MCF 10A (cell line): ENCODE measurements at regions of chr4 and their contacts with region 1.

Region 1: GRCh38 chr4:105471566-105472176 is 2.2 kb downstream of the PPA2 start:
- DNase-seq: peak; percentile 87
- H3K4me3 Mint-ChIP-seq: peak overlapping the region; percentile 98
- H3K27ac Mint-ChIP-seq: peak overlapping the region; percentile 99
- H3K4me1 Mint-ChIP-seq: peaks cover 18% of the 10 kb centered on the region
- H3K27me3 Mint-ChIP-seq: no peaks in the 10 kb centered on the region
- CTCF ChIP-seq: peak; percentile 56

Region 2: GRCh38 chr4:104064646-104065577 is 1406.8 kb before region 1 on chr4:
- CTCF ChIA-PET with region 1: no interaction called
- POLR2A ChIA-PET with region 1: interaction called, 3 read pairs
- intact Hi-C with region 1: loop called (anchors 5 kb)
- DNase-seq: peak; percentile 72
- H3K4me3 Mint-ChIP-seq: no peak overlapping the region
- H3K27ac Mint-ChIP-seq: peak overlapping the region; percentile 2
- H3K4me1 Mint-ChIP-seq: no peaks in the 10 kb centered on the region
- H3K27me3 Mint-ChIP-seq: no peaks in the 10 kb centered on the region
- CTCF ChIP-seq: peak; percentile 63

Region 3: DNA sequence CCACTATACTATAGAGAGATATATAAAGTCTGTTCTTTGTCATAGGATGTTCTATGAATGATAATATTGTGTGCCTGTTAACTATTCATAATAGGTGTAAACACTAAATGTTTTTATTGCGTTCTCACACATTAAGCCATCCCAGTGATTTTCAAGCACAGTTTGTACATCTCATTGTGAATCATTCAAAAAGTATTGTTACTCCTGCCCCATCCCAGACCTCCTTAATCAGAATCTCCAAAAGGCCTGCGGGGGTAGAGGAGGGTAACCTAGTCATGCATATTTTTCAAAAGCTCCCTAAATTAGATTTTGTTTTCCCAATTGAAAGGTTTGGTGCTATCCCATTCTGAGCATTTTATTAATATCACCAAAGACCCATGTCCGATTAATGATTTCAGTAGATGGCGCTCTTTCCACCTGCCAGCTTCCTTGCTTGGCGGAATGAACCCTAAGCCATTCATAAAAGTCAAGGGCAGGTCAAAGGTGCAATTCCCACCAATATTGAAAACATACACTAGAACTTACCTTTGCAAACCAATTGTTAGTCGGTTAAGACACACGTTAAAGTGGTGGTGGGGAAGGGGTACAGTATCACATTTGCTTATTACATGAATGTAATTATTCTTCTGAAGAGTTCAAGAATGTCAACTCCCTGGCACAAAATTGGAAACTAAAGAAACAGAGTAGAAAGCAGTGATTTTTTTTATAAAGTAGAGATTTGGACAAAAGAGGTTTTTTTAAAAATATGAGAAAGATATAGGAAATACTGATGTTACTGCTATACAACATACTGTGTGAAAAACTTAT is 330.8 kb before region 1 on chr4:
- CTCF ChIA-PET with region 1: interaction called, 4 read pairs
- POLR2A ChIA-PET with region 1: interaction called, 4 read pairs
- intact Hi-C with region 1: loop called (anchors 1 kb)
- DNase-seq: peak; percentile 62
- H3K4me3 Mint-ChIP-seq: no peak overlapping the region
- H3K27ac Mint-ChIP-seq: no peak overlapping the region
- H3K4me1 Mint-ChIP-seq: peaks cover 7% of the 10 kb centered on the region
- H3K27me3 Mint-ChIP-seq: no peaks in the 10 kb centered on the region
- CTCF ChIP-seq: peak; percentile 57

Region 4: DNA sequence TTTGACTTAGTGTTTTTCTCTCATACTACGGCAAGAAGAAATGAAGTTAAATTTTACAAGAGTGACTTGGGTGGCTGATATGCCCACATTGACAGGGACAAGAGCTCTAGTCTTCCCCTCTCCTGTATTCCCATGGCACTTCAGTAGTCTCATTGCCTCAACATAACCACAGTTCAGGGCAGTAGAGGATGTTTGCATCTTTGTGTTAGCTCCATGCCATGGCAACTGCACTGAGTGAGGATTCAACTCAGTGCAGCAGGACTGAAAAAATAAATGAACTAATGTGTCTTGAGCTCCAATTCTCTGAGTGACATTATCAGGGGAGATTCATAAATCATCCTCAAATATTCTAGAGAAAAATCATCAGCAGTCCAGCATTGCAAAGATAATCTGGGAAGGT is 246.2 kb before region 1 on chr4:
- CTCF ChIA-PET with region 1: no interaction called
- POLR2A ChIA-PET with region 1: no interaction called
- intact Hi-C with region 1: no loop called
- DNase-seq: no peak
- H3K4me3 Mint-ChIP-seq: no peak overlapping the region
- H3K27ac Mint-ChIP-seq: peak overlapping the region; percentile 20
- H3K4me1 Mint-ChIP-seq: no peaks in the 10 kb centered on the region
- H3K27me3 Mint-ChIP-seq: no peaks in the 10 kb centered on the region
- CTCF ChIP-seq: no peak

Region 5: DNA sequence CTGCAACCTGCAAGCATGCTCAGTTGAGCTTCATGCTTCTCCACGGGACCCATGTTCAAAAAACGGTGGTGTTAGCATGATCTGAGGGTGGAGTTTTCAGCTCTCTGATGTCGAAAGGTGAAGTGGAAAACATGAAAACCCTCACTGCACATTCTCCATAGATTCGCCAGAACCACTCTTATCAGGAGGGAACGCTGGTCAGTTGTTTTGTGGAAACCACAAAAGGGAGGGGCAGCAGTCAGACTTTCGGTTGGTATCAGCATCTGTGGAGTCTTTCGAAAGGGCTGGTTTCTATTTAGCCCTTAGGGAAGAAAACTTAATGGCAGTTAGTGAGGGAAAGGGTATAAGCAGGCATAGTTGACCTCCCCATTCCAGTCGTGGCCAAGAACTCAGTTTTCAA is 10.4 kb before region 1 on chr4:
- CTCF ChIA-PET with region 1: interaction called, 14 read pairs
- POLR2A ChIA-PET with region 1: interaction called, 18 read pairs
- intact Hi-C with region 1: no loop called
- DNase-seq: peak; percentile 62
- H3K4me3 Mint-ChIP-seq: peak overlapping the region; percentile 14
- H3K27ac Mint-ChIP-seq: peak overlapping the region; percentile 81
- H3K4me1 Mint-ChIP-seq: peaks cover 28% of the 10 kb centered on the region
- H3K27me3 Mint-ChIP-seq: no peaks in the 10 kb centered on the region
- CTCF ChIP-seq: no peak

Region 6: DNA sequence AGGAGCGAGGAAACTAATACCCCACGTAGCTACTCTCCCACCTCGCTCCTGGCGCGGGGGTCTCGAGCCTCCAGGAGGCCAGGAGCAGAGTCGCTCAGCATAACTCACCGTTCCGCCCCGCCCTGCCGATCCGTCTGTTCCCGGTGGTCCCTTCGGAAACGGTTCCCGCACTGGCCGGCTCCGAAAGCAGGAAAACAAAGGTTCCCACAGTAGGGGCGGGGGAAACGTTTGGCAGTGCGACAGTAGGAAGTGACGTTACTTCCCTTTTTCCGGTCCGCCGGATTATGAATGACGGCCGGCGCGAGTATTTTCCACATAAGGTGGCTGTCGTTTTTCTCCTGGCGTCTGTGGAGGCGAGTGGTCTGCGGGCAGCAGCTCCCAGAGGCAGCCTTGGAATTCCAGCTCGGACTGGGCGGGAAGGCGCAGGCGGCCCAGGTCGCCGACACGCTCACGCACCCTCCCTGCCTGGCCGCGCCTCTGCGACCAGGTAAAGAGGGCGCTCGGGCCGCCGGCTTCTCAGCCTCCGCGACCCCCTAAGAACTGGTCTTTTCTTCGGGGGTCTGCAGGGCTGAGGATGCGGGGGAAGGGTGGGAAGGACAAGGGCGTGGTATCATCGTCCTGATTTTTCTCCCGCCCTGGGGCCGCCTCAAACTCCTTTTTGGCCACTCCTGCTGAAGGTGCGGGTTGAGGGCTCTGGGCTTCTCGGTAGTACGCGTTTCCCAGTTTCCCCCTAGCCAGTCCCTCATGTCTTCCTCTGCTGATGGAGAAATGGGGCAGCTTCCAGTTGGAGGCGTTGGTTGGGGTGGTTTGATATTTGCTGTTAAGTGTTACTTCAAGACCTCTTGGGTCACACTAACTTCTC is 237.1 kb after region 1 on chr4 and contains the starts of genes GSTCD and INTS12:
- CTCF ChIA-PET with region 1: interaction called, 39 read pairs
- POLR2A ChIA-PET with region 1: interaction called, 34 read pairs
- intact Hi-C with region 1: no loop called
- DNase-seq: peak; percentile 93
- H3K4me3 Mint-ChIP-seq: peak within 1 kb of the TSS; percentile 86
- H3K27ac Mint-ChIP-seq: peak within 1 kb of the TSS; percentile 91
- H3K4me1 Mint-ChIP-seq: peaks cover 28% of the 10 kb centered on the region
- H3K27me3 Mint-ChIP-seq: no peaks in the 10 kb centered on the region
- CTCF ChIP-seq: no peak
- total RNA-seq, gene GSTCD: 16.3 and 19.2 TPM in 2 replicates
- total RNA-seq, gene INTS12: 34.5 and 40.0 TPM in 2 replicates

Region 7: GRCh38 chr4:106854569-106855351 is 1383.1 kb after region 1 on chr4:
- CTCF ChIA-PET with region 1: no interaction called
- POLR2A ChIA-PET with region 1: no interaction called
- intact Hi-C with region 1: no loop called
- DNase-seq: no peak
- H3K4me3 Mint-ChIP-seq: no peak overlapping the region
- H3K27ac Mint-ChIP-seq: no peak overlapping the region
- H3K4me1 Mint-ChIP-seq: no peaks in the 10 kb centered on the region
- H3K27me3 Mint-ChIP-seq: no peaks in the 10 kb centered on the region
- CTCF ChIP-seq: no peak